PC-3 (cell line): ENCODE measurements at regions of chr14 and their contacts with region 1.

Region 1: DNA sequence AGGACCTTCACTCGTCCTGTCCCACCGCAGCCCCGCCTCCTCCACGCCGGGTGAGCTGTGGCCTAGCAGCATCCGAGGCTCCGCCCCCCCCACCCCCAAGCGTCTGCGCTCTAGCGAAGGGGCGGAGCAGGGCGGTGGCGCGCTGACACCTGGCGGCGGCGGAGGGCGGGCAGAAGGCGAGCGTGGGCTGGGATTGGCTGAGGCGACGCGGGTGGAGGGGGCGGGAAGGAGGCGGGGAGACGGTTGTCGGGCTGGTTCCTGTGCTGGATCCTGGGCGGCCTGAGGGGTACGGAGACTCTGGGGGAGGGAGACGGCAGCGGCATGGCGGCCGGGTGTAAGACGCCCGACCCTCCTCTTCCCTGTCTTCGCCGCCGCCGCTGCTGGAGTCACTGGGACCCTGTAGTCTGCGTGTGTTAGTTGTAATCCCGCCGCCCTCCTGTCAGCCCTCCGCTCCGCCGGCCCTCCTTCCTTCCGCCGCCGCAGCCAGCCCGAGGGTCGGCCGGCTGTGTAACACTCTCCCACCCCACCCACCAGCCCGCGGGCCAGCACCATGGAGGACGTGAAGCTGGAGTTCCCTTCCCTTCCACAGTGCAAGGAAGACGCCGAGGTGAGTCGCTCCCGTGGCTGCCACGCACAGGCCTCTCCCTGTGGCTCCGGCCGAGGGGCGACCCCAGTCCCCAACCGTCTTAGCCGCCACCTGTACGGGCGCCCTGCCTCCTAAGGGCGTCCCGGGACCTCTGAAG is at the start of gene STYX:
- DNase-seq: peak; percentile 99
- ATAC-seq: peak; percentile 96
- H3K4me3 ChIP-seq: peak within 1 kb of the TSS; percentile 80
- H3K27ac ChIP-seq: peak within 1 kb of the TSS; percentile 19
- H3K4me1 ChIP-seq: no peaks in the 10 kb centered on the region; the same call in 1 of the 2 replicates
- H3K27me3 ChIP-seq: no peaks in the 10 kb centered on the region
- CTCF ChIP-seq: no peak
- total RNA-seq, gene STYX: 11.1 and 14.1 TPM in 2 replicates

Region 2: GRCh38 chr14:52402812-52403526 is 327.1 kb before region 1 on chr14:
- CTCF ChIA-PET with region 1: no interaction called
- POLR2A ChIA-PET with region 1: interaction called, 11 read pairs
- intact Hi-C with region 1: no loop called
- DNase-seq: peak; percentile 83
- ATAC-seq: peak; percentile 86
- H3K4me3 ChIP-seq: no peak overlapping the region
- H3K27ac ChIP-seq: no peak overlapping the region
- H3K4me1 ChIP-seq: peaks cover 17% of the 10 kb centered on the region
- H3K27me3 ChIP-seq: no peaks in the 10 kb centered on the region
- CTCF ChIP-seq: no peak

Region 3: GRCh38 chr14:52678591-52678990 is 51.5 kb before region 1 on chr14:
- CTCF ChIA-PET with region 1: no interaction called
- POLR2A ChIA-PET with region 1: no interaction called
- intact Hi-C with region 1: loop called (anchors 10 kb)
- DNase-seq: peak; percentile 56
- ATAC-seq: peak; percentile 80
- H3K4me3 ChIP-seq: no peak overlapping the region
- H3K27ac ChIP-seq: no peak overlapping the region
- H3K4me1 ChIP-seq: no peaks in the 10 kb centered on the region
- H3K27me3 ChIP-seq: no peaks in the 10 kb centered on the region
- CTCF ChIP-seq: peak; percentile 76

Region 4: DNA sequence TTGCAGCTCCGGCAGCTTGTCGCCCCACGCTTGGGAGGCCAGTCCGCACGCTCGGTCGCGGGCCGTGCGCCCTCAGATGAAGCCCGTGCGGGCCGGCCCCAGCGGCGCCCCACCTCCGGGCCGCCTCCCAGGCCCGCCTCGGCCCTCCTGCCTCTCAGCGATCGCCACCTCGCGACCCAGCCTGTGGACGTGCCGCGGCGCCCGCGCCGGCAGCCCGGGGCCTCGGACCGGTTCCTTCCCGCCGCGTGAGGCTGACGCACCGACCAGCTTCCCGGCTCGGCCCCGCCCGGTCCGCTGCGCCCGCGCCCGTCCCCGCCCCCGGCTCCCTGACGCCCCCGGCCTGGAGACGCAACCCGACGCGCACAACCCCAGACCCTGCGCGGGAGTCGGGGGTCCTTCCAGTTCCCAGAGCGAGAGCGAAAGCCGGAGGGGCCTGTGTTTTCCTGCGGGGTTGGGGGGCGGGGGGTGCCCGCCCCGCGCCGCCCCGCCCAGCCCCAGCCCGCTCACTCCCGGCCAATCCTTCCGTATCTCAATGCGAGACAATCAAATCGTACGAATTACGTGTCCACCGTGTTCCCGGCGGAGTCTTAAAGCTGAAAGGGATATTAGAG is 34.5 kb before region 1 on chr14 and contains the start of gene ERO1A:
- CTCF ChIA-PET with region 1: interaction called, 5 read pairs
- POLR2A ChIA-PET with region 1: no interaction called
- intact Hi-C with region 1: loop called (anchors 1 kb)
- DNase-seq: peak; percentile 88
- ATAC-seq: peak; percentile 69
- H3K4me3 ChIP-seq: peak within 1 kb of the TSS; percentile 79
- H3K27ac ChIP-seq: peak within 1 kb of the TSS; percentile 87
- H3K4me1 ChIP-seq: peaks cover 52% of the 10 kb centered on the region
- H3K27me3 ChIP-seq: no peaks in the 10 kb centered on the region
- CTCF ChIP-seq: no peak
- total RNA-seq, gene ERO1A: 151 and 207 TPM in 2 replicates

Region 5: GRCh38 chr14:52706724-52707706 is 23.1 kb before region 1 on chr14 and contains the start of gene PSMC6:
- CTCF ChIA-PET with region 1: no interaction called
- POLR2A ChIA-PET with region 1: interaction called, 3 read pairs
- intact Hi-C with region 1: loop called (anchors 1 kb)
- DNase-seq: peak; percentile 91
- ATAC-seq: peak; percentile 95
- H3K4me3 ChIP-seq: peak within 1 kb of the TSS; percentile 97
- H3K27ac ChIP-seq: peak within 1 kb of the TSS; percentile 76
- H3K4me1 ChIP-seq: peaks cover 47% of the 10 kb centered on the region
- H3K27me3 ChIP-seq: no peaks in the 10 kb centered on the region
- CTCF ChIP-seq: no peak
- total RNA-seq, gene PSMC6: 193 and 232 TPM in 2 replicates

Region 6: DNA sequence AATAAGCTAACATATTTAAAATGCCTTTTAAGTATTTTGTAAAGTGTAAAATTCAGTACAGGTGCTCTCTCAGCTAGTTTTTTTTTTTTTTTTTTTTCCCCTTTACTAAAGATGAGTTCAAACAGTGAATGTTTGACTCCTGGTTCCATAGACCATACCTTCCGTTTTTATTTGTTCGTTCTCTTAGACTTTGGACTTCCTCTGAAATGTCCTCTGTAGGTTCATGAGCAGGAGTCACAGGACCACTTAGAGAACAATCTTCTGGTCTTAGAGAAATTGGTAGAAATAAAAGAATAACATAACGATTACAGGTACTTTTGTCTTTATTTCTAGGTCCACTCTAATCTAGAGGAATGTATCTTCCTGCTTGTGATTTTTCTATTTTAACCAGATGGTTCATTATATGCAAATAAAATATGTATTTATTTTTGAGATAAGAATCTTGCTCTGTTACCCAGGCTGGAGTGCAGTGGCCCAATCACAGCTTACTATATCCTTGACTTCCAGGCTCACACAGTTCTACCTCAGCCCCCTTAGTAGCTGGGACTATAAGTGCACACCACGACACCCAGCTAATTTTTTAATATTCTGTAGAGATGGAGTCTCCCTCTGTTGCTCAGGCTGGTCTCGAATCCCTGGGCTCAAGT is 25.6 kb after region 1 on chr14:
- CTCF ChIA-PET with region 1: no interaction called
- POLR2A ChIA-PET with region 1: no interaction called
- intact Hi-C with region 1: no loop called
- DNase-seq: no peak
- ATAC-seq: no peak
- H3K4me3 ChIP-seq: no peak overlapping the region
- H3K27ac ChIP-seq: no peak overlapping the region
- H3K4me1 ChIP-seq: no peaks in the 10 kb centered on the region
- H3K27me3 ChIP-seq: no peaks in the 10 kb centered on the region
- CTCF ChIP-seq: no peak

Region 7: GRCh38 chr14:52791203-52792096 is 61.4 kb after region 1 on chr14 and contains the start of gene GNPNAT1:
- CTCF ChIA-PET with region 1: no interaction called
- POLR2A ChIA-PET with region 1: interaction called, 4 read pairs
- intact Hi-C with region 1: loop called (anchors 2 kb)
- DNase-seq: peak; percentile 97
- ATAC-seq: peak; percentile 90
- H3K4me3 ChIP-seq: peak within 1 kb of the TSS; percentile 78
- H3K27ac ChIP-seq: peak within 1 kb of the TSS; percentile 86
- H3K4me1 ChIP-seq: peaks cover 25% of the 10 kb centered on the region
- H3K27me3 ChIP-seq: no peaks in the 10 kb centered on the region
- CTCF ChIP-seq: no peak
- total RNA-seq, gene GNPNAT1: 38.2 and 44.5 TPM in 2 replicates

Region 8: GRCh38 chr14:52824507-52824906 is 94.4 kb after region 1 on chr14:
- CTCF ChIA-PET with region 1: no interaction called
- POLR2A ChIA-PET with region 1: no interaction called
- intact Hi-C with region 1: no loop called
- DNase-seq: no peak
- ATAC-seq: no peak
- H3K4me3 ChIP-seq: no peak overlapping the region
- H3K27ac ChIP-seq: no peak overlapping the region
- H3K4me1 ChIP-seq: no peaks in the 10 kb centered on the region
- H3K27me3 ChIP-seq: no peaks in the 10 kb centered on the region
- CTCF ChIP-seq: no peak

Region 9: DNA sequence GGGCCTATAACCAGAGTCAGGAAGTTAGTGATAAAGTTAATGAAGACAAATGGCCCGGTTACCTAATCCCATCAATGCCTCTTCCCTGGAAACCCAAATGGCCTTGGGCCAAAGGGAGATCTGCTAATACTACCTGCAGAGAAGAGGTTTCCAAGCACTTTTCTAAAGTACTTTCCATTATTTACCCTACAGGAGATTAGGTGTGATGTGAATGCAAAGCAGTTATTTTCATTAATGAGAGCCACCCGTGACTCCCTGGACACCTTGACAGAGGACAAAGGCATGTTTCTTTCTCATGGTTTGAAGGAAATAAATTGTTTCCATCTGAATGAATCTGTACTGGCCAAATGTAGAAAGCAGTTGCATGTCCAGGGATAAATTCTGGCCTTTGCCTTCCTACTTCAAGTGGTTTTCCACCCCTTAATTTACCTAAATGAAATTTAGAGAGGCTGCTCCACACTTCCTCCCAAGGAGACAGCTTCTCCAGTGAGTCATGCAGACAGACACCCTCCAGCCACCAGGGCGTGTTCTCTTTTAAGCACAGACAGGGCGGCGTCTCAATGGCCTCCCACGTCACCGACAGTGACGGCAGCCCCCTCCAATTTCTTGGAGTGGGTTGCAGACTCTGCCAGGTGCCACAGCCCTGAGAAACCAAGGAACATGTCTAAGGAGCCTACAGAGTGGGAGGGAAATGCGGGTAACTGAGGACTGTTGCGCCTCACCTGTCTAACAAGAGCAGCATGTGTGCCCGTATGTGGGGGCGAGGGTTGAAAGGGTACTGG is 105.2 kb after region 1 on chr14:
- CTCF ChIA-PET with region 1: no interaction called
- POLR2A ChIA-PET with region 1: no interaction called
- intact Hi-C with region 1: no loop called
- DNase-seq: peak; percentile 67
- ATAC-seq: peak; percentile 93
- H3K4me3 ChIP-seq: no peak overlapping the region
- H3K27ac ChIP-seq: peak overlapping the region; percentile 33
- H3K4me1 ChIP-seq: peaks cover 24% of the 10 kb centered on the region
- H3K27me3 ChIP-seq: no peaks in the 10 kb centered on the region
- CTCF ChIP-seq: no peak

Region 10: DNA sequence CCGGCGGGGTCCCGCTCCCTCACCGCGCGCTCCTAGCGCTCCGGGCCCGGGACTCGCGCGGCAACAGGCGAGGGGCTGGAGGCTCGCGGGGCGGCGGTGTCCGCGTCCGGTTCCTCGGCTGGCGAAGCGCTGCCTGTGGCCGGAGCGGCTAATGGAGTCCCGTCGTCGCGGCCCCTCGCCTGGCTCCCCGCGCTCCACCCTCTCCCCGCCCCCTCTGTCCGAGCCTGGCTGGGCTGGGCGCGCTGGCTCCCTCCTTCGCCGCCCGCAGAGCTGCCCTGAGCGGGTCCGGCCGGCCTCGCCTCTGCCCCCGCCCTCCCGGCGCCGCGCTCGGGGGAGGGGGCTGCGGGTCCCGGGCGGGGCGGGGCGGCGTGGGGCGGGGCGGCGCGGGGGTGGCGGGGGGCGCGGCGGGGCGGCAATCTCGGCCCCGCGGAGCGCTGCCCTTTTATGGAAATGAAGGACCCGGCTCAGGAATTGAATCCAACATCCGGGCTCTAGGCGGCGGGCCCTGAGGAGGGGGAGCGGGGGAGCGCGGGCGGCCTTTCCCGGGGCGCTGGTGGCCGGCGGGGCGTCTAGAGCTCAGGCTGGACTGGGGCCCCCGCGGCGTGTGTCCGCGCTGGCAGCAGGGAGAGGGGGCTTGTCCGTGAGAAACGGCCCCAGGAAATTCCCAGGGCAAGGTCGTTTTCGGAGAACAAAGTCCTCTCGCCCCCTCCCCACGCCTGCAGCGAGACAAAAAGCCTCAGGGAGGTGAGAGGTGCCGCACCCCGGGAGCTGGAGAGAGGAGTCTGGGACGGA is 221.0 kb after region 1 on chr14 and contains the start of gene FERMT2:
- CTCF ChIA-PET with region 1: no interaction called
- POLR2A ChIA-PET with region 1: no interaction called
- intact Hi-C with region 1: loop called (anchors 1 kb)
- DNase-seq: peak; percentile 83
- ATAC-seq: peak; percentile 90
- H3K4me3 ChIP-seq: peak within 1 kb of the TSS; percentile 82
- H3K27ac ChIP-seq: peak within 1 kb of the TSS; percentile 80
- H3K4me1 ChIP-seq: peaks cover 25% of the 10 kb centered on the region
- H3K27me3 ChIP-seq: no peaks in the 10 kb centered on the region
- CTCF ChIP-seq: no peak
- total RNA-seq, gene FERMT2: 29.1 and 38.6 TPM in 2 replicates